CD8-positive, alpha-beta memory T cell (primary cell): ENCODE measurements at regions of chr7 and their contacts with region 1.

Region 1: DNA sequence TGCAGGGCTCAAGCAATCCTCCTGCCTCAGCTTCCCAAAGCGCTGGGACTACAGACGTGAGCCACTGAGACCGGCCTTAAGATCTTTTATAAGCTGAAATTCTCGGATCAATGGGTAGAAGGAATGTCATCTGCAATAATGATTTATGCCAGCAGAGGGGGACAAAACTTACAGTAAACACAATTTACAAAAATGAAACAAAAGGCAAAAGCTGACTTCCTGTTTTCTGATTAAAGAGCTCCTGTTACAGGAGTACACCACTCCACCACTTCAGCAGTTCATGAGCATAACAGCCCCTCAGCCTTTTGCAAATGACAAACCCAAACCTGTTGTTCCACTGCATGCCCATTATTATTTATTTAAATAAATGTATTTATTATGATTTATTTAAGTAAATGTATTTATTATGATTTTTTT is 88.5 kb upstream of the ATP6V0A4 start:
- DNase-seq: peak in 3 of 5 donors; percentile 24 to 72 (median 66)
- H3K4me3 ChIP-seq: no peak overlapping the region
- H3K4me3 Mint-ChIP-seq: peak overlapping the region in 3 of 7 donors; percentile 39 to 65 (median 52)
- H3K27ac ChIP-seq: no peak overlapping the region
- H3K27ac Mint-ChIP-seq: peak overlapping the region in 6 of 8 donors; percentile 39 to 81 (median 76)
- H3K4me1 ChIP-seq: peaks cover 4% of the 10 kb centered on the region
- H3K4me1 Mint-ChIP-seq: peaks cover 5 to 23% (median 16%) of the 10 kb centered on the region in 3 donors
- H3K27me3 ChIP-seq: no peaks in the 10 kb centered on the region
- H3K27me3 Mint-ChIP-seq: peaks cover 0 to 6% of the 10 kb centered on the region in 2 donors

Region 2: GRCh38 chr7:138295049-138295637 is 591.4 kb before region 1 on chr7:
- CTCF ChIA-PET with region 1: no interaction called
- POLR2A ChIA-PET with region 1: no interaction called
- DNase-seq: no peak
- H3K4me3 ChIP-seq: no peak overlapping the region
- H3K4me3 Mint-ChIP-seq: no peak overlapping the region
- H3K27ac ChIP-seq: no peak overlapping the region
- H3K27ac Mint-ChIP-seq: no peak overlapping the region
- H3K4me1 ChIP-seq: no peaks in the 10 kb centered on the region
- H3K4me1 Mint-ChIP-seq: no peaks in the 10 kb centered on the region
- H3K27me3 ChIP-seq: no peaks in the 10 kb centered on the region
- H3K27me3 Mint-ChIP-seq: no peaks in the 10 kb centered on the region

Region 3: GRCh38 chr7:138875794-138876193 is 10.7 kb before region 1 on chr7:
- CTCF ChIA-PET with region 1: interaction called, 25 read pairs
- POLR2A ChIA-PET with region 1: interaction called, 3 read pairs
- DNase-seq: peak; percentile 27 to 83 (median 74)
- H3K4me3 ChIP-seq: no peak overlapping the region
- H3K4me3 Mint-ChIP-seq: peak overlapping the region in 4 of 7 donors; percentile 5 to 43 (median 30)
- H3K27ac ChIP-seq: no peak overlapping the region
- H3K27ac Mint-ChIP-seq: peak overlapping the region; percentile 31 to 87 (median 77)
- H3K4me1 ChIP-seq: peaks cover 11% of the 10 kb centered on the region
- H3K4me1 Mint-ChIP-seq: peaks cover 10 to 24% (median 21%) of the 10 kb centered on the region in 3 donors
- H3K27me3 ChIP-seq: no peaks in the 10 kb centered on the region
- H3K27me3 Mint-ChIP-seq: no peaks in the 10 kb centered on the region

Region 4: GRCh38 chr7:138898255-138898654 is 11.7 kb after region 1 on chr7:
- CTCF ChIA-PET with region 1: interaction called, 47 read pairs
- POLR2A ChIA-PET with region 1: interaction called, 3 read pairs
- DNase-seq: peak in 1 of 5 donors; percentile 23
- H3K4me3 ChIP-seq: no peak overlapping the region
- H3K4me3 Mint-ChIP-seq: peak overlapping the region in 2 of 7 donors; percentile 5 to 67
- H3K27ac ChIP-seq: no peak overlapping the region
- H3K27ac Mint-ChIP-seq: peak overlapping the region in 1 of 8 donors; percentile 36
- H3K4me1 ChIP-seq: peaks cover 16% of the 10 kb centered on the region
- H3K4me1 Mint-ChIP-seq: peaks cover 17 to 30% (median 25%) of the 10 kb centered on the region in 3 donors
- H3K27me3 ChIP-seq: peaks cover 15% of the 10 kb centered on the region
- H3K27me3 Mint-ChIP-seq: peaks cover 34 to 69% of the 10 kb centered on the region in 2 donors

Region 5: GRCh38 chr7:138903186-138903820 is 16.8 kb after region 1 on chr7:
- CTCF ChIA-PET with region 1: interaction called, 47 read pairs
- POLR2A ChIA-PET with region 1: interaction called, 3 read pairs
- DNase-seq: peak; percentile 43 to 90 (median 80)
- H3K4me3 ChIP-seq: peak overlapping the region; percentile 10
- H3K4me3 Mint-ChIP-seq: peak overlapping the region; percentile 60 to 89 (median 71)
- H3K27ac ChIP-seq: no peak overlapping the region
- H3K27ac Mint-ChIP-seq: peak overlapping the region in 7 of 8 donors; percentile 13 to 83 (median 66)
- H3K4me1 ChIP-seq: peaks cover 26% of the 10 kb centered on the region
- H3K4me1 Mint-ChIP-seq: peaks cover 22 to 36% (median 33%) of the 10 kb centered on the region in 3 donors
- H3K27me3 ChIP-seq: peaks cover 7% of the 10 kb centered on the region
- H3K27me3 Mint-ChIP-seq: peaks cover 42 to 52% of the 10 kb centered on the region in 2 donors

Region 6: GRCh38 chr7:138981332-138982203 is 95.1 kb after region 1 on chr7 and contains the start of gene KIAA1549:
- CTCF ChIA-PET with region 1: interaction called, 12 read pairs
- POLR2A ChIA-PET with region 1: no interaction called
- DNase-seq: peak; percentile 15 to 54 (median 32)
- H3K4me3 ChIP-seq: peak within 1 kb of the TSS; percentile 48
- H3K4me3 Mint-ChIP-seq: peak within 1 kb of the TSS; percentile 78 to 91 (median 89)
- H3K27ac ChIP-seq: no peak within 1 kb of the TSS
- H3K27ac Mint-ChIP-seq: peak within 1 kb of the TSS in 5 of 8 donors; percentile 1 to 77 (median 61)
- H3K4me1 ChIP-seq: peaks cover 5% of the 10 kb centered on the region
- H3K4me1 Mint-ChIP-seq: peaks cover 9 to 18% (median 10%) of the 10 kb centered on the region in 3 donors
- H3K27me3 ChIP-seq: peaks cover 26% of the 10 kb centered on the region
- H3K27me3 Mint-ChIP-seq: peaks cover 46 to 47% of the 10 kb centered on the region in 2 donors
- total RNA-seq, gene KIAA1549: 1.1 to 1.2 TPM

Region 7: GRCh38 chr7:139124084-139124914 is 237.8 kb after region 1 on chr7:
- CTCF ChIA-PET with region 1: interaction called, 22 read pairs
- POLR2A ChIA-PET with region 1: interaction called, 5 read pairs
- DNase-seq: no peak
- H3K4me3 ChIP-seq: no peak overlapping the region
- H3K4me3 Mint-ChIP-seq: no peak overlapping the region
- H3K27ac ChIP-seq: peak overlapping the region; percentile 41
- H3K27ac Mint-ChIP-seq: no peak overlapping the region
- H3K4me1 ChIP-seq: peaks cover 13% of the 10 kb centered on the region
- H3K4me1 Mint-ChIP-seq: peaks cover 5 to 12% (median 9%) of the 10 kb centered on the region in 3 donors
- H3K27me3 ChIP-seq: no peaks in the 10 kb centered on the region
- H3K27me3 Mint-ChIP-seq: peaks cover 4% of the 10 kb centered on the region in 2 donors